Gastrocnemius medialis (tissue), 4 donors: ENCODE measurements at regions of chr2 and their contacts with region 1.

Region 1: DNA sequence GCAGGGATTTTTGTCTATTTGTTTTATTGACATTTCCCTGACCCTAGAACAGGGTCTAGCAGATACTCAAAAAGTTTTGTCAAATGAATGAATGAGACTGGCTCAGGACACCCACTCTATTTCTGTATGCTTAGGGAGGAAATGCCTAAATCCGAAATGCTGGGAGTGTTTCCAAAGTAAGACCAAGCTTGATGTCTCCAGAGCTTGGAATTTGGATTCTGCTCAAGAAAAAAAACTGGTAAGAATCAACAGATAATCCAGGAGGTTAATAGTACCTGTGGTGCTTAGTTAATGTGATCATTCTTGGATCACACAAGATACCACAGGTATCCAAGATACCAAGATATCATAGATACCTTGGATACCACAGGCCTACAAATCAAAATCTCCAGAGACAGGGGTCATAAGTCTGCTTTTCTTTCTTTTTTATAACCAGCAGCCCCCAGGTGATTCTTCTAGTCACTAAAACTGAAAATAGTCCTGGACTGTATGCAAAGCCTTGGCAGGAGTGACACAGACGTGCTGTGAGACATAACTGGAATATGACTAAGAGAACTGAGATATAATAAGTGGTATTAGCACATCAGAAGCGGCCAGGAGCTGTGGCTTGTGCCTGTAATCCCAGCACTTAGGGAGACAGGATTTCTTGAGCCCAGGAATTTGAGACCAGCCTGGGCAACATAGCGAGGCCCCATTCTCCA is 39.9 kb upstream of the SP3 start:
- DNase-seq: peak; percentile 78 to 87
- ATAC-seq: peak; percentile 100
- H3K4me3 ChIP-seq: no peak overlapping the region
- H3K27ac ChIP-seq: peak overlapping the region; percentile 68 to 83 (median 78)
- H3K4me1 ChIP-seq: peaks cover 10 to 18% of the 10 kb centered on the region in 2 donors
- H3K27me3 ChIP-seq: no peaks in the 10 kb centered on the region
- CTCF ChIP-seq: no peak
- POLR2A ChIP-seq: no peak

Region 2: GRCh38 chr2:173488861-173489260 is 516.2 kb before region 1 on chr2:
- in situ Hi-C with region 1: no loop called
- intact Hi-C with region 1: no loop called
- DNase-seq: no peak
- ATAC-seq: no peak
- H3K4me3 ChIP-seq: no peak overlapping the region
- H3K27ac ChIP-seq: no peak overlapping the region
- H3K4me1 ChIP-seq: no peaks in the 10 kb centered on the region
- H3K27me3 ChIP-seq: no peaks in the 10 kb centered on the region
- CTCF ChIP-seq: no peak
- POLR2A ChIP-seq: no peak

Region 3: DNA sequence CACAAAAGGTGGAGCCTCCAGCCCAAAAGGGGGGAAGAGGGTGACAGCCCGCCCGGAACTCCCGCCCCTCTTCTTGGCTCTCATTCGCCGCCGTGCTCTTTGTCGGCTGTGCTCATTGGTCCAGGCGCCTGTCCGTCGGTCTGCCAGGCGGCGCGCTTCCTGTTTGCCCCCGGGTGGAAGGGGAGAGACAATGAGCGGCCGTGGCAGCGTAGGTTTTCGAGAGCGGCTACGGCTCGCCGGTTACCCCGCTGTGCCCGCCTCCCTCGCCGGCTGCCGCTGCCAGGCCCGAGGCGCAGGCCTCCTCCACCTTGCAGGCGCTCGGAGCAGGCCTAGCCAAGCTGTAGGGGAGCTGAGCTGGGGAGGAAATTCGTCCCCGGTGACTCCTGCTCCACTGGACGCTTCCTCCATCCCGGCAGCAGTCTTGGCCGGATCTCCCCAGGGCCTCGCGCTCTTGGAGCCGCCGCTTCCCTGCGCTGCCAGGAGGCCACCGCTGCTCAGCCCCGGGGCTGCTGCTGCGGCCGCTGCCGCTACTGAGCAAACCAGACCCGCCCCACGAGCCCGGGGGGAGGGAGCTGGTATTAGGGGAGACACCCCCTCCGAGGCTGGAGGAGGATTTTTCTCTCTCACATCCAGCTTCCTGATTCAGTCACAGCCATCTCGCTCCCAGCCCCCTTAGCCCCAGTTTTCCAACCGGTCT is 39.6 kb before region 1 on chr2 and contains the start of gene SP3:
- in situ Hi-C with region 1: no loop called
- intact Hi-C with region 1: loop called (anchors 2 kb)
- DNase-seq: peak; percentile 97
- ATAC-seq: peak; percentile 78 to 80
- H3K4me3 ChIP-seq: peak within 1 kb of the TSS; percentile 92 to 98 (median 94)
- H3K27ac ChIP-seq: peak within 1 kb of the TSS; percentile 98 to 100 (median 98)
- H3K4me1 ChIP-seq: peaks cover 32 to 35% of the 10 kb centered on the region in 2 donors
- H3K27me3 ChIP-seq: no peaks in the 10 kb centered on the region
- CTCF ChIP-seq: peak in 3 of 5 experiments; percentile 7 to 18 (median 16)
- POLR2A ChIP-seq: peak; percentile 91 to 95
- total RNA-seq, gene SP3: 47.9 to 68.9 (median 58.7) TPM